ENCODE measurements at regions of chr1 and their contacts with region 1.

Region 1: DNA sequence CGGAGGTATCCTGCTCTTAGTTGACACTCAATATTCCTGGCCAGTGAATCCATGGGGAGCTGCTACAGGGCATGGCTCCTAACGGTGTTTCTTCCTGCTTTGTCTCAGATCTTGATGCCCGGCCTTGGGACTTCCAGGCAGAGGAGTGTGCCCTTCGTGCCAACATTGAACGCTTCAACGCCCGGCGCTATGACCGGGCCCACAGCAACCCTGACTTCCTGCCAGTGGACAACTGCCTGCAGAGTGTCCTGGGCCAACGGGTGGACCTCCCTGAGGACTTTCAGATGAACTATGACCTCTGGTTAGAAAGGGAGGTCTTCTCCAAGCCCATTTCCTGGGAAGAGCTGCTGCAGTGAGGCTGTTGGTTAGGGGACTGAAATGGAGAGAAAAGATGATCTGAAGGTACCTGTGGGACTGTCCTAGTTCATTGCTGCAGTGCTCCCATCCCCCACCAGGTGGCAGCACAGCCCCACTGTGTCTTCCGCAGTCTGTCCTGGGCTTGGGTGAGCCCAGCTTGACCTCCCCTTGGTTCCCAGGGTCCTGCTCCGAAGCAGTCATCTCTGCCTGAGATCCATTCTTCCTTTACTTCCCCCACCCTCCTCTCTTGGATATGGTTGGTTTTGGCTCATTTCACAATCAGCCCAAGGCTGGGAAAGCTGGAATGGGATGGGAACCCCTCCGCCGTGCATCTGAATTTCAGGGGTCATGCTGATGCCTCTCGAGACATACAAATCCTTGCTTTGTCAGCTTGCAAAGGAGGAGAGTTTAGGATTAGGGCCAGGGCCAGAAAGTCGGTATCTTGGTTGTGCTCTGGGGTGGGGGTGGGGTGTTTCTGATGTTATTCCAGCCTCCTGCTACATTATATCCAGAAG is 16.7 kb downstream of the ALX3 start:
- DNase-seq: peak; percentile 25
- ATAC-seq: peak; percentile 62
- H3K4me3 ChIP-seq: no peak overlapping the region
- H3K27ac ChIP-seq: no peak overlapping the region
- H3K4me1 ChIP-seq: peaks cover 36% of the 10 kb centered on the region
- H3K27me3 ChIP-seq: no peaks in the 10 kb centered on the region
- CTCF ChIP-seq: peak; percentile 89
- POLR2A ChIP-seq: no peak
- RAD21 ChIP-seq: peak; percentile 90

Region 2: DNA sequence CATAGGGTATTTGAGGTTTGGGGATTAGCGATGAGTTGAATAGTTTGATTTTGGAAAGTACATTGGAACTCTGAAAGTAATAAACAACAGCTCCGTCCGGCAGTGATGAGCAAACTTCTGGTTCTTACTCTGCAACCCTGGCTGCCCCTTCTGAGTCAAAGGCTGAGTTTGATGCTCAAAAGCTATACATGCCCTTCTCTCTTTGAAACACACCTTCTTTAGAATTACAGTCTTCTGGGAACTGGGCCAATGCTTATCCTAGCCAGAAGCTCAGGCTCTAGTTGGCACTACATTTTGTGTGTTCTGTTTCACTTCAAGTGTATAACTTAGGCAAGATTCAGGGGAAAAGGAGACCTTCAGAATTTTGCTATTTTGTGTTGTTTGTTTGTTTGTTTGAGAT is 59.9 kb before region 1 on chr1:
- CTCF ChIA-PET with region 1: no interaction called
- POLR2A ChIA-PET with region 1: no interaction called
- dilution Hi-C with region 1: no loop called
- in situ Hi-C with region 1: no loop called
- intact Hi-C with region 1: no loop called
- DNase-seq: peak; percentile 39
- ATAC-seq: peak; percentile 67
- H3K4me3 ChIP-seq: no peak overlapping the region
- H3K27ac ChIP-seq: no peak overlapping the region
- H3K4me1 ChIP-seq: peaks cover 7% of the 10 kb centered on the region
- H3K27me3 ChIP-seq: no peaks in the 10 kb centered on the region
- CTCF ChIP-seq: no peak
- POLR2A ChIP-seq: no peak
- RAD21 ChIP-seq: no peak

Region 3: GRCh38 chr1:110106013-110106941 is 52.5 kb after region 1 on chr1:
- CTCF ChIA-PET with region 1: interaction called, 5 read pairs
- POLR2A ChIA-PET with region 1: no interaction called
- dilution Hi-C with region 1: no loop called
- in situ Hi-C with region 1: loop called (anchors 5 kb)
- intact Hi-C with region 1: loop called (anchors 1 kb)
- DNase-seq: peak; percentile 69
- ATAC-seq: peak; percentile 98
- H3K4me3 ChIP-seq: no peak overlapping the region
- H3K27ac ChIP-seq: no peak overlapping the region
- H3K4me1 ChIP-seq: no peaks in the 10 kb centered on the region; the same call in 1 of the 2 replicates
- H3K27me3 ChIP-seq: peaks cover 46% of the 10 kb centered on the region
- CTCF ChIP-seq: peak; percentile 94
- POLR2A ChIP-seq: no peak
- RAD21 ChIP-seq: peak; percentile 92

Region 4: DNA sequence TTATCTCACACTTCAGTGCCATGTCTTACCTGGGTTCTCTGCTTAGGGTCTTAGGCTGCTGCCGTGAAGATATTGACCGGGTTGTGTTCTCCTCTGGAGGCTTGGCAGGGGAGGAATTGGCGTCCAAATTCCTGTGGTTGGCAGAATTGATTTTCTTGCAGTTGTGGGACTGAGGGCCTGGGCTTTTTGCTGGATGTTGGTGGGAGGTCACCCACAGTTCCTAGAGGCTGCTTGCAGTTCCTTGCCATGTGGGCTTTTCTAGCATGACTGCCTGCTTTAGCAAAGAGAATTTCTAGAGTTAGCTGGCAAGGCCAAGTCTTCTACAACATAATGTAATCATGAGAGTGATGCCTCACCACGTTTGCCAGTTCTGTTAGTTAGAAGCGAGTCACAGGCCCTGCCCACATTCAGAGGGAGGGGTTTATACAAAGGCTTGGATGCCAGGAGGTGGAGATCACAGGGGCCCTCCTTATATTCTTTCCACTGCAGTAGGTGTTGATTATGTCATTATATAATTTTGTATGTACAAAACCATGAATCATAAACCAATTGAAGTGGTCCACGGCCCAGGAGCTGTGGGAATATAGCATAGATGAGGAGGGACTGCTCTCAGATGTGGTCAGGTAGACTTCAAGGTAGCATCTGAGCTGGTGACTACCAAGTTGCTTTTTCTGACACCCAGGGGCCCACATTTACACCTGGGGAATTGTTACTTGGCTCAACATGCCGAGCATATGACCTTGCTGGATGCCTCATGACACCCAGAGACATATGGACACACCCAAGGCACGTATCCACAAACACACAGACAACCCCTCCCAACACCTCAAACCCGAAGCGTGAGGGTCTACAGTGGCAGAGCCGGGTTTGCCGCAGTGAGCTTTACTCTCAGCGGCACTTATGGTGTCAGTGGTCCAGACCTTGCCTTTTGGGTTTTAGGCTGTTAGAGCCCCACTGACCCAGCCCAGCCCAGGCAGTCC is 65.1 kb after region 1 on chr1:
- CTCF ChIA-PET with region 1: interaction called, 3 read pairs
- POLR2A ChIA-PET with region 1: no interaction called
- dilution Hi-C with region 1: no loop called
- in situ Hi-C with region 1: no loop called
- intact Hi-C with region 1: loop called (anchors 1 kb)
- DNase-seq: peak; percentile 52
- ATAC-seq: peak; percentile 40; the same call in 1 of the 2 replicates
- H3K4me3 ChIP-seq: no peak overlapping the region
- H3K27ac ChIP-seq: no peak overlapping the region
- H3K4me1 ChIP-seq: no peaks in the 10 kb centered on the region
- H3K27me3 ChIP-seq: peaks cover 29% of the 10 kb centered on the region
- CTCF ChIP-seq: no peak
- POLR2A ChIP-seq: no peak
- RAD21 ChIP-seq: no peak